ENCODE measurements at regions of chr11 and their contacts with region 1.

Region 1: DNA sequence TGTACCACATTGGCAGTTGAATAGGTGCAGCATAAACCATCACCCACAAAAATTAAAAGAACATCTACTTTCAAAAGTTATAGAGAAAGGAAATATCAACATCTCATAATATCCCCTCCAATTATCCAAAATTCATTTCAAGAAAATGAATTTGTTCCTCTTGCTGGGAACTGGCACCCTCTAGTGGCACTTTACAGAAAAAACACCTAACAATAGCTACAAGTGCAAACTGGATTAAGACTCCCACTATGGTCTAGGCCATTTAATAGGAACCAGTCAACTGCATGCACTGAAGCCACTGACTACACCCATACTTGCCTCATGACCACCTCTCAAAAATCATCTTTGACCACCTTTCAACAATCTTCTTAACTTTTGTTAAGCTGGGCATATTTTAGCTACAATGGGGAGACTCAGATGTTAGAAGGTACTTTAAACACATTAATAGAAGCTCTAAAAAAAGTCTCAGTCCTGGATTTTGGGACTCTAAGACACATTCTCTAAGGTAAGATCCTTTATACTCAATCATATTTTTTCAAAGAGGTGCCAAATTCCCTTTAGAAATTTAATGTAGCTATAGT is 17.3 kb downstream of the TRAF6 start:
- DNase-seq: peak; percentile 42
- ATAC-seq: peak; percentile 78
- H3K4me3 ChIP-seq: no peak overlapping the region
- H3K27ac ChIP-seq: no peak overlapping the region
- H3K4me1 ChIP-seq: no peaks in the 10 kb centered on the region
- H3K27me3 ChIP-seq: no peaks in the 10 kb centered on the region
- CTCF ChIP-seq: peak; percentile 44 to 88 (median 72); a peak in 5 of 6 replicates
- POLR2A ChIP-seq: no peak
- RAD21 ChIP-seq: peak; percentile 67

Region 2: GRCh38 chr11:36289226-36289852 is 203.5 kb before region 1 on chr11 and contains the start of gene COMMD9:
- CTCF ChIA-PET with region 1: interaction called, 29 read pairs
- POLR2A ChIA-PET with region 1: no interaction called
- RAD21 ChIA-PET with region 1: interaction called, 4 to 5 read pairs
- intact Hi-C with region 1: loop called (anchors 1 kb)
- DNase-seq: peak; percentile 88
- ATAC-seq: peak; percentile 96
- H3K4me3 ChIP-seq: peak within 1 kb of the TSS; percentile 66 to 74
- H3K27ac ChIP-seq: no peak within 1 kb of the TSS
- H3K4me1 ChIP-seq: peaks cover 0 to 12% of the 10 kb centered on the region in 2 experiments; a peak in 1 of 4 replicates
- H3K27me3 ChIP-seq: no peaks in the 10 kb centered on the region
- CTCF ChIP-seq: no peak
- POLR2A ChIP-seq: no peak
- RAD21 ChIP-seq: no peak
- total RNA-seq, gene COMMD9: 33.3 TPM

Region 3: DNA sequence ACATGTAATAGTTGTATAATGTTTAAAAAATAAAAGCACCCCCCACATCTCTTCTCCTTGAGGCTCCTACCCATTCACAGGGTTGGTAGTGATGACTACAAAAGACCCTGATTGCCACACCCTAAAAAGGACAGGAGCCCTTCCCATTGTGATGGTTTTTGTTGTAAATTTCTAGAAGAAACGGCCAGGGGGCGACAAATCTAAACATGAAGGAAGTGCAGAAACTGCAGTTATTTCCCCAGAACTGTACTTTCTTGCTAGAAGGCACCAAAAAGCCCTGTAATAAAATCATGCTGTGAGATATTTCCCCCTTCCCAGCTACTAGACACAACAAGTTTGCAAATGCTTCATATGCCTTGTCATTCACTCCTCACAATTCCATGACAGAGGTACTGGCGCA is 185.9 kb before region 1 on chr11:
- CTCF ChIA-PET with region 1: interaction called, 8 read pairs
- POLR2A ChIA-PET with region 1: no interaction called
- RAD21 ChIA-PET with region 1: no interaction called
- intact Hi-C with region 1: loop called (anchors 1 kb)
- DNase-seq: peak; percentile 27
- ATAC-seq: peak; percentile 67
- H3K4me3 ChIP-seq: no peak overlapping the region
- H3K27ac ChIP-seq: no peak overlapping the region
- H3K4me1 ChIP-seq: peaks cover 0 to 6% of the 10 kb centered on the region in 2 experiments; a peak in 1 of 4 replicates
- H3K27me3 ChIP-seq: peaks cover 9% of the 10 kb centered on the region; the same call in 1 of the 2 replicates
- CTCF ChIP-seq: peak; percentile 50 to 61 (median 54); a peak in 4 of 6 replicates
- POLR2A ChIP-seq: no peak
- RAD21 ChIP-seq: peak; percentile 60

Region 4: DNA sequence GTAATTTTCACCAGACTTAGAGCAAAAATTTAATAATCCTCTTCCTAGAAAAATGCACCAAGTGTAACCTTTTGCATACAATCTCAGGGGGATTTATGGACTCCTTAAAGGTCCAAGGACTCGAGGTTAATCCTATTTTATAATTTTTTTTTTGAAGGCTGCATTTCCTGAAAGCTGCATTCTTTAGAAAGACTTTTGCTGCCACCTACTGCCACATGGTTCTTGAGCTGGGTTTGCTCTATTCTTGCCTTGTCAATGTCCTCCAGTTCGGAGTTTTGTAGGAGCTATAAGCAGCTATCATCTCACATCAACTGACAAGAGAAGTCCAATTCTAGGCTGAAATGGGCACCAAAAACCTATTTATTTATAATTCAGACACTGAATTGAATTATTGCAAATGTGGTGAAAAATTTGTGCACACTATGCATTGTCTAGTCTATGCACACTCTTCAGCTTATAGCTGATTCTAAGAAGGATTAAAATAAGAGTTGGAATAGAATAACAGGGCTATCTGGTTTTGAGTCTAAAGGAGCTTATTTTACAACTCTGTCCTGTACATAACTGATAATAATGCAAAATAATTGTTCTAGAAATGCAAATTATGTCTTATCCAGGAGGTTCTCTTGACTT is 14.0 kb before region 1 on chr11:
- CTCF ChIA-PET with region 1: interaction called, 24 read pairs
- POLR2A ChIA-PET with region 1: interaction called, 3 read pairs
- RAD21 ChIA-PET with region 1: interaction called in 1 of 2 experiments, 3 read pairs
- intact Hi-C with region 1: no loop called
- DNase-seq: peak; percentile 22
- ATAC-seq: peak; percentile 73
- H3K4me3 ChIP-seq: no peak overlapping the region
- H3K27ac ChIP-seq: no peak overlapping the region
- H3K4me1 ChIP-seq: no peaks in the 10 kb centered on the region
- H3K27me3 ChIP-seq: no peaks in the 10 kb centered on the region
- CTCF ChIP-seq: peak; percentile 40 to 64 (median 62); a peak in 4 of 6 replicates
- POLR2A ChIP-seq: no peak
- RAD21 ChIP-seq: peak; percentile 80

Region 5: GRCh38 chr11:36541001-36541400 is 48.2 kb after region 1 on chr11:
- CTCF ChIA-PET with region 1: interaction called, 11 read pairs
- POLR2A ChIA-PET with region 1: no interaction called
- RAD21 ChIA-PET with region 1: no interaction called
- intact Hi-C with region 1: no loop called
- DNase-seq: peak; percentile 38
- ATAC-seq: peak; percentile 91
- H3K4me3 ChIP-seq: no peak overlapping the region
- H3K27ac ChIP-seq: no peak overlapping the region
- H3K4me1 ChIP-seq: no peaks in the 10 kb centered on the region
- H3K27me3 ChIP-seq: peaks cover 31% of the 10 kb centered on the region; the same call in 1 of the 2 replicates
- CTCF ChIP-seq: peak; percentile 15 to 51 (median 42); a peak in 4 of 6 replicates
- POLR2A ChIP-seq: no peak
- RAD21 ChIP-seq: peak; percentile 57